ENCODE measurements at regions of chr16 and their contacts with region 1.

Region 1: DNA sequence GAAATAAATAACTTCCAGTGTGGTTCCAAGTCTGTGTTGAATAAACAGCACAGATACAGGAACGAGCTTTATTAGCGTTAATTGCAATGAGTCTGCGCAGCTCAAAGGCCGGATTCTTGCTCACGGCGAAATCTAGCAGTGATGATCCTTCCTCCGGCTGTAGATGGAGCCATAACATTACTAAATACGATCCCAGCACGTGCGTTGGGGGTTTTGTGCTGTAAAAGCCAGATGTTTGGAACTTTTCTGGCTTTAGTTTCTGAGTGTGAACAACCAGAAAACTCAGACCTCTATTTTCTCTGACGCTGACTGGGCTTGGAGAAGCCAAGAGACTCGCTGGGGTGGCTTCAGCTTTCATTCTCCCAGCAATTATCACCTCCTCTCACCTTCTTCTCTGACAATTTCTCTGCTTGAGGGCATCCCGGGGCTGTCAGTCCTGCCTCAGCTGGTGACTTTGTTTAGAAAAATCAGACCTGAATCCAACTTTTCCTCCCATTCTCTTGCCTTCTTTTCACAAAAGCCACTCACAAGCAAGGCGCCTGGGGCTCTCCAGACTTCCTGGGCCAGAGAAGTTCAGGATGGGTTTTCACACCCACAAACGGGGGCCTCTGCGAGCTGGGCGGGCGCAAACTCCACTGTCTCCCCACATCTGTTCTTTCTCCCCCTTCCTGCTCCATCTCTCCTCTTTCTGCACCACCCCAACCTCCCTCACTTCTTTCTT is 47.1 kb upstream of the AKTIP start:
- DNase-seq: peak; percentile 22 to 81 (median 38)
- ATAC-seq: peak; percentile 67
- H3K4me3 ChIP-seq: no peak overlapping the region
- H3K4me3 Mint-ChIP-seq: no peak overlapping the region
- H3K27ac ChIP-seq: no peak overlapping the region
- H3K27ac Mint-ChIP-seq: no peak overlapping the region
- H3K4me1 ChIP-seq: peaks cover 23% of the 10 kb centered on the region
- H3K4me1 Mint-ChIP-seq: peaks cover 35% of the 10 kb centered on the region
- H3K27me3 ChIP-seq: peaks cover 3% of the 10 kb centered on the region in 2 experiments
- H3K27me3 Mint-ChIP-seq: peaks cover 38% of the 10 kb centered on the region
- CTCF ChIP-seq: peak; percentile 74

Region 2: GRCh38 chr16:53495325-53495724 is 54.8 kb before region 1 on chr16:
- CTCF ChIA-PET with region 1: no interaction called
- POLR2A ChIA-PET with region 1: no interaction called
- intact Hi-C with region 1: no loop called
- DNase-seq: peak in 1 of 14 experiments; percentile 25
- ATAC-seq: no peak
- H3K4me3 ChIP-seq: no peak overlapping the region
- H3K4me3 Mint-ChIP-seq: no peak overlapping the region
- H3K27ac ChIP-seq: no peak overlapping the region
- H3K27ac Mint-ChIP-seq: peak overlapping the region; percentile 61
- H3K4me1 ChIP-seq: peaks cover 23% of the 10 kb centered on the region
- H3K4me1 Mint-ChIP-seq: peaks cover 80% of the 10 kb centered on the region
- H3K27me3 ChIP-seq: no peaks in the 10 kb centered on the region
- H3K27me3 Mint-ChIP-seq: no peaks in the 10 kb centered on the region
- CTCF ChIP-seq: no peak

Region 3: GRCh38 chr16:53518550-53519416 is 31.3 kb before region 1 on chr16:
- CTCF ChIA-PET with region 1: no interaction called
- POLR2A ChIA-PET with region 1: interaction called, 11 read pairs
- intact Hi-C with region 1: loop called in 1 of 2 experiments (anchors 1 kb)
- DNase-seq: peak; percentile 45 to 94 (median 65)
- ATAC-seq: peak; percentile 82
- H3K4me3 ChIP-seq: peak overlapping the region; percentile 49
- H3K4me3 Mint-ChIP-seq: peak overlapping the region; percentile 73
- H3K27ac ChIP-seq: peak overlapping the region in 1 of 2 donors; percentile 78
- H3K27ac Mint-ChIP-seq: peak overlapping the region; percentile 75
- H3K4me1 ChIP-seq: peaks cover 55% of the 10 kb centered on the region
- H3K4me1 Mint-ChIP-seq: peaks cover 43% of the 10 kb centered on the region
- H3K27me3 ChIP-seq: no peaks in the 10 kb centered on the region
- H3K27me3 Mint-ChIP-seq: no peaks in the 10 kb centered on the region
- CTCF ChIP-seq: no peak

Region 4: DNA sequence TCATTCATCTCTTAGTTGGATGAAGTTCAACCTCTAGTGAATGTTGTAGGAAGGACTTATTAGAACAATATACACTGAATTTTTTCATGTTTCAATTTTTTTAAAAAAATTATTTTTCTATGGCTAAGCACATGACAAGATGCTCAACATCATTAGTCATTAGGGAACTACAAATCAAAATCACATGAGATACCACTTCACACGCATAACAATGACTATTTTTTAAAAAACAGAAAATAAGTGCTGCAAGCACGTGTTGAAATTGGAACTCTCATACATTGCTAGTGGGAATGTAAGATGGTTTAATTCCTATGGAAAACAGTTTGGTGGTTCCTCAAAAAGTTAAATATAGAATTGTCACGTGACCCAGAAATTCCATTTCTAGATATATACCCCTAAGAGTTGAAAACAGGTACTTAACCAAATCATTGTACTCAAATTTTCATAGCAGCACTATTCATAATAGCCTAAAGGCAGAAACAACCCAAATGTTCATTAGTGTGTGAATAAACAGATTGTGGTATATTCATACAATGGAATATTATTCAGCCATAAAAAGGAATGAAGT is 38.0 kb after region 1 on chr16:
- CTCF ChIA-PET with region 1: no interaction called
- POLR2A ChIA-PET with region 1: no interaction called
- intact Hi-C with region 1: no loop called
- DNase-seq: no peak
- ATAC-seq: no peak
- H3K4me3 ChIP-seq: no peak overlapping the region
- H3K4me3 Mint-ChIP-seq: no peak overlapping the region
- H3K27ac ChIP-seq: no peak overlapping the region
- H3K27ac Mint-ChIP-seq: no peak overlapping the region
- H3K4me1 ChIP-seq: no peaks in the 10 kb centered on the region
- H3K4me1 Mint-ChIP-seq: no peaks in the 10 kb centered on the region
- H3K27me3 ChIP-seq: no peaks in the 10 kb centered on the region
- H3K27me3 Mint-ChIP-seq: peaks cover 6% of the 10 kb centered on the region
- CTCF ChIP-seq: no peak

Region 5: DNA sequence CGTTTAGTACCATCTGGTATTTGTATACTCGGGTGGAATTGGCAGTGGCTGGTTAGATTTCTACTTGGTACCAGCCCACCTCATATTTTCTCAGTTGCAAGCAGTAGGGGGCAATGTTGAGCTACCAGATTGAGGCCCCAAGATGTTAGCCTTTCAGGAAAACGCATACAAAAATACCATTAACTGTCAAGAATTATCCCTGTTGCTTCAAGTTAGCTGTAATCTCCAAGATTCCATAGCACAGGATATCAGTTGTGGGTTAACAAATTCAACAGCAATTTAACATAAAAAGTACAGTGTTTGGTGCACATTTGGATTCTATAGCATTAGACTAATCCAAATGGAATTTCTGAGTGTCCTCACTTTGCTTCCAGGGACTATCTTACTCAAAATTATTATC is 342.0 kb after region 1 on chr16:
- CTCF ChIA-PET with region 1: no interaction called
- POLR2A ChIA-PET with region 1: no interaction called
- intact Hi-C with region 1: loop called in 1 of 2 experiments (anchors 5 kb)
- DNase-seq: peak in 12 of 14 experiments; percentile 2 to 64 (median 24)
- ATAC-seq: peak; percentile 49
- H3K4me3 ChIP-seq: no peak overlapping the region
- H3K4me3 Mint-ChIP-seq: no peak overlapping the region
- H3K27ac ChIP-seq: no peak overlapping the region
- H3K27ac Mint-ChIP-seq: no peak overlapping the region
- H3K4me1 ChIP-seq: no peaks in the 10 kb centered on the region
- H3K4me1 Mint-ChIP-seq: peaks cover 4% of the 10 kb centered on the region
- H3K27me3 ChIP-seq: no peaks in the 10 kb centered on the region
- H3K27me3 Mint-ChIP-seq: no peaks in the 10 kb centered on the region
- CTCF ChIP-seq: peak; percentile 56

Region 6: DNA sequence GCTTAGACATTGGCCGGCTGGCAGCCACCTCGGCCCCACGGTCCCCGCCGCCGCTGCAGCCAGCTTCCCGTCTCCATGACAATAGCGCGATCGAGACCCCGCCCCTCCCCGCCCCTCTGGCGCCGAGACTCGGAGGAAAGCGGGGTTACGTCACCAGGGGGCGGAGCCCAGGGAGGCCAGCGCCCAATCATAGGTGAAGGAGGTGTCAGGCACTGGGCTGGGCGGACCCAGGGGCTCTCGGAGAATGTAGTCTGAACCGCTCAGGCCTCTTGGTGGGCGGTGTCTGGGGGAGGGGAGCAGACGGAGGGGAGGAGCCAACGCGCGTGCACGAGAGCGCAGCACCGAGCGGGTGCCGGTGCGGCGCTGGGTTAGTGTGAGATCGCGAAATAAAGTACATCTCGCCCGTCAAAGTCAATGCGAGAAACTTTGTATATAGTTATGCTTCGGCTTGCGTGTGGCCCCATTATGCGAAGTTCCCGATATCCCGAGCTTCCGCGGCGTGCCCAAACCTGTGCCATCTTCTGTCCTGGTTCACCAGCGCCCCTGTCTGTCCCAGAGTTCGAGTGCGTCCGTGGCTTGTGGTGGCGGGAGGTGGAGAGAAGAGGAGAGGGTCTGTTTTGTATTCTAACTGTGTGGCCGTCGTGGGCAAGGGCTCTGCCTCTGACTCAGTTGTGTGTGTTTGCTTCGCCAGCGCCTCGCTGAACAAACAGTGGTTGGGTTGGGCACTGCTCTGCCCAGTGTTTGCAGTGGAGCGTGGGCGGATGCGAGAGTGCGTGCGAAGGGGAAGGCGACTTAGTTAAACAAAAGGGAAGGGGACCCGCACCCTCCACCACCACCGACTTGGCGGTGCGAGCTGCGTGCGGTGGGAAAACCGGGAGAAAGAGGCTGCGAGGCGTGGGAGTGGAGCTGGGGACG is 1379.2 kb after region 1 on chr16:
- CTCF ChIA-PET with region 1: no interaction called
- POLR2A ChIA-PET with region 1: no interaction called
- intact Hi-C with region 1: loop called in 1 of 2 experiments (anchors 10 kb)
- DNase-seq: peak; percentile 73 to 94 (median 90)
- ATAC-seq: peak; percentile 97
- H3K4me3 ChIP-seq: peak overlapping the region; percentile 49
- H3K4me3 Mint-ChIP-seq: peak overlapping the region; percentile 92
- H3K27ac ChIP-seq: no peak overlapping the region
- H3K27ac Mint-ChIP-seq: peak overlapping the region; percentile 61
- H3K4me1 ChIP-seq: peaks cover 47% of the 10 kb centered on the region
- H3K4me1 Mint-ChIP-seq: peaks cover 38% of the 10 kb centered on the region
- H3K27me3 ChIP-seq: peaks cover 45 to 77% of the 10 kb centered on the region in 2 experiments
- H3K27me3 Mint-ChIP-seq: peaks cover 74% of the 10 kb centered on the region
- CTCF ChIP-seq: no peak

Region 7: DNA sequence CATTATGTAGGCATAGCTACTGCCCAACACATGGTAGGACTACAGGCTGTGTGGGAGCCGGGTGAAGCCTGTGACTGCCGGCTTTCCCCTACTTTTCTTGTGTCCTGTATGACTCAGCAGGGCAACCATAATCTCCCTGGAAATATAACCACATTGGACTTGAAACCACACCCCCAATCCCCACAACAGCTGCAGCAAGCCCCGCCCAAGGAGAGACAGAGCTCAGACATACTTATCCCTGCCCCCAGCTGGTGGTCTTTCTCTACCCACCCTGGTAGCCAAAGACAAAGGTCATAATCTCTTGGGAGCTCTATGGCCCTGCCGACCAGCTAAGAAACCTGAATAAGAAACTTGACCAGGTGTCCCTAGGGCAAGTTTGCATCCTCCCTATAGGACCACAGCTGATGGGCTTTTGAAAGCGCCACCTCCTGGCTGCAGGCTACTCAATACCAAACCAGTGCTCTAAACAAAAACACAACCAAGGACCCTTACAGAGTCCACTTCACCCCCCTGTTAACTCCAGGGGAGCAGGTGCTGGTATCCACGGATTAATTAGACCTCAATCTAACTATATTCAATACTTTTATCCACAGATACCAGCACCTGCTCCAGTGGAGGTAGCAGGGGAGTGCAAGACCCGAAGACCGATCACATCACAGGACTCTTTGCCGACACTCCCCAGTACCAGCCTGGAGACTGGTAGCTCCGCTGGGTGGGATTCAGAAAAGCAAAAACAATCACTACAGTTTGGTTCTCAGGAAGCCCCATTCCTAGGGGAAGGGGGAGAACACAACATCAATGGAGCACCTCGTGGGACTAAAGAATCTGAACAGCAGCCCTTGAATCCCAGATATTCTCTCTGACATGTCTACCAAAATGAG is 1471.7 kb after region 1 on chr16:
- CTCF ChIA-PET with region 1: no interaction called
- POLR2A ChIA-PET with region 1: no interaction called
- intact Hi-C with region 1: loop called (anchors 5 to 10 kb)
- DNase-seq: peak in 1 of 14 experiments; percentile 5
- ATAC-seq: no peak
- H3K4me3 ChIP-seq: no peak overlapping the region
- H3K4me3 Mint-ChIP-seq: no peak overlapping the region
- H3K27ac ChIP-seq: no peak overlapping the region
- H3K27ac Mint-ChIP-seq: no peak overlapping the region
- H3K4me1 ChIP-seq: no peaks in the 10 kb centered on the region
- H3K4me1 Mint-ChIP-seq: no peaks in the 10 kb centered on the region
- H3K27me3 ChIP-seq: peaks cover 2 to 7% of the 10 kb centered on the region in 2 experiments
- H3K27me3 Mint-ChIP-seq: peaks cover 50% of the 10 kb centered on the region
- CTCF ChIP-seq: no peak

Region 8: DNA sequence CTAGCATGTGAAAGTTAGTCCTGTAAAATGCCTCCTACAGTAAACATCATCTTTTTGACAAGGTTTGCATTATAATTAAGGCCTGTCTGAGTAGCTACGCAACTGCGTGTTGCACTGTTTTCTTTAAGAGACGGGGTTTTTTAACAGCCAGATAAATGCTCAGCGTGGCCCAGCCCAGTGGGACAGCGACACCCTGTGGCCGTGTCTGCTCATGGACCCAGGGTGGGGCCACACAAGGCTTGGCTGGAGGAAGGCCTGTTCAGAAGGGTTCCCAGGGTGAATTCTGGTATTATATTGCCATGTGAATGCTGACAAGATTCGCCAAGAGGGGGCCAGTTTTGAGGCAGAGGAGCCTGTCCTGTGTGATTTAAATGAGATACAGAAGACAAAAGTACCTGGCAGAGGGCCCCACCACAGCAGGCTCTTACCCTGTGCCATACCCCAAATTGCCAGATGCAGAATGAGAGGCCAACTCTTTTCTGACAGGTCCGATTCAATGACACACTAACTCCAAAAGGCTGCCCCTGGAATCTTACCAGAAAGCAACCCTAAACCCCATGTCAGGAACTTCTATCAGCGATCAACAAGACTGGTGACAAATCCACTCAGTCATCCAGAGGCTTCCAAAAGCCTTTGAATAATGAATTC is 1708.0 kb after region 1 on chr16:
- CTCF ChIA-PET with region 1: no interaction called
- POLR2A ChIA-PET with region 1: no interaction called
- intact Hi-C with region 1: loop called (anchors 2 to 10 kb)
- DNase-seq: peak in 12 of 14 experiments; percentile 2 to 45 (median 14)
- ATAC-seq: no peak
- H3K4me3 ChIP-seq: no peak overlapping the region
- H3K4me3 Mint-ChIP-seq: no peak overlapping the region
- H3K27ac ChIP-seq: no peak overlapping the region
- H3K27ac Mint-ChIP-seq: no peak overlapping the region
- H3K4me1 ChIP-seq: no peaks in the 10 kb centered on the region
- H3K4me1 Mint-ChIP-seq: no peaks in the 10 kb centered on the region
- H3K27me3 ChIP-seq: peaks cover 0 to 8% of the 10 kb centered on the region in 2 experiments
- H3K27me3 Mint-ChIP-seq: peaks cover 16% of the 10 kb centered on the region
- CTCF ChIP-seq: no peak

Region 9: GRCh38 chr16:55465077-55465896 is 1915.2 kb after region 1 on chr16:
- CTCF ChIA-PET with region 1: interaction called, 3 read pairs
- POLR2A ChIA-PET with region 1: no interaction called
- intact Hi-C with region 1: loop called in 1 of 2 experiments (anchors 10 kb)
- DNase-seq: peak; percentile 72 to 88 (median 76)
- ATAC-seq: peak; percentile 99
- H3K4me3 ChIP-seq: no peak overlapping the region
- H3K4me3 Mint-ChIP-seq: no peak overlapping the region
- H3K27ac ChIP-seq: no peak overlapping the region
- H3K27ac Mint-ChIP-seq: no peak overlapping the region
- H3K4me1 ChIP-seq: peaks cover 2% of the 10 kb centered on the region
- H3K4me1 Mint-ChIP-seq: no peaks in the 10 kb centered on the region
- H3K27me3 ChIP-seq: no peaks in the 10 kb centered on the region
- H3K27me3 Mint-ChIP-seq: peaks cover 5% of the 10 kb centered on the region
- CTCF ChIP-seq: peak; percentile 99